ENCODE measurements at regions of chr1 and their contacts with region 1.

Region 1: DNA sequence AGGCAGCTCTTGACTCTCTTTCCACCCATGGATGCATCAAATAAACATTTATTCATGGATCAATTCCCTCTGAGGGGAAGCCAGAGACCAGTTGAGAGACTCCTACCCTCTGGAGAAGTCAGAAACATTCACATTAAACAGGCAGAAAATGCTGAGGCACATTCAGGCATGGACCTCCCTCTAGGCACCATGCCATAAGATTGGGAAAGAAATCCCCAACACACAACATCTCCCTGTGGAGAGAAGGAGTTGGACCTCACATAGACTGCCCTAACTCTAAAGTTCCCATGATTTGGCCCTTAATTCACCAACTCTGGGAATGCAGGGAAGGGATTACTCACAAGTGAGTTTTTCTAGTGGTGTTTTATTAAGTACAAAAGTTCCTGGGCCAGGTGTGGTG is 415.3 kb upstream of the C1orf87 start:
- DNase-seq: no peak
- H3K4me3 ChIP-seq: no peak overlapping the region
- H3K27ac ChIP-seq: no peak overlapping the region
- H3K4me1 ChIP-seq: no peaks in the 10 kb centered on the region
- H3K27me3 ChIP-seq: no peaks in the 10 kb centered on the region
- CTCF ChIP-seq: no peak

Region 2: DNA sequence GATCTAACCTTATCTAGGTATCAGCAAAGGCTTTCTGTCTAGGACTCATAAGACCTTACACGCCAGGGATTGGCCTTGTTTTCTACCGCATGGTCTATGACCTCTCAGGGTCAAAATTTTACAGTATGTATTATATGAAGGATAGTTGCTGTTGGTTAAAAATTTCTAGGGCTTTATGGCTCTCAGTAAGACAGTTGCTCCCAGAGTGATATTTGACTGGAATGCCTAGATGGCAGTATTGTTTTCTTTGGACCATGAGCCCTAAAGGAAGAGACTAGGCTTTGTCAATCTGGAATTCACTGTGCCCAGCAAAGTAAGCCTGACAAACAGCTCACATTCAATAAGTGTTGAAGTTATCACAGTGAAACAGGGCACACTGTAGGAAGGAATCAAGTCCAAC is 452.9 kb before region 1 on chr1:
- intact Hi-C with region 1: no loop called
- DNase-seq: no peak
- H3K4me3 ChIP-seq: no peak overlapping the region
- H3K27ac ChIP-seq: no peak overlapping the region
- H3K4me1 ChIP-seq: no peaks in the 10 kb centered on the region
- H3K27me3 ChIP-seq: no peaks in the 10 kb centered on the region
- CTCF ChIP-seq: no peak

Region 3: GRCh38 chr1:61732726-61733125 is 1243.9 kb after region 1 on chr1:
- intact Hi-C with region 1: loop called (anchors 10 kb)
- DNase-seq: no peak
- H3K4me3 ChIP-seq: no peak overlapping the region
- H3K27ac ChIP-seq: no peak overlapping the region
- H3K4me1 ChIP-seq: no peaks in the 10 kb centered on the region
- H3K27me3 ChIP-seq: no peaks in the 10 kb centered on the region
- CTCF ChIP-seq: no peak

Measured in ascending aorta (tissue), 2 donors.